PC-3 (cell line): ENCODE measurements at regions of chr3 and their contacts with region 1.

Region 1: DNA sequence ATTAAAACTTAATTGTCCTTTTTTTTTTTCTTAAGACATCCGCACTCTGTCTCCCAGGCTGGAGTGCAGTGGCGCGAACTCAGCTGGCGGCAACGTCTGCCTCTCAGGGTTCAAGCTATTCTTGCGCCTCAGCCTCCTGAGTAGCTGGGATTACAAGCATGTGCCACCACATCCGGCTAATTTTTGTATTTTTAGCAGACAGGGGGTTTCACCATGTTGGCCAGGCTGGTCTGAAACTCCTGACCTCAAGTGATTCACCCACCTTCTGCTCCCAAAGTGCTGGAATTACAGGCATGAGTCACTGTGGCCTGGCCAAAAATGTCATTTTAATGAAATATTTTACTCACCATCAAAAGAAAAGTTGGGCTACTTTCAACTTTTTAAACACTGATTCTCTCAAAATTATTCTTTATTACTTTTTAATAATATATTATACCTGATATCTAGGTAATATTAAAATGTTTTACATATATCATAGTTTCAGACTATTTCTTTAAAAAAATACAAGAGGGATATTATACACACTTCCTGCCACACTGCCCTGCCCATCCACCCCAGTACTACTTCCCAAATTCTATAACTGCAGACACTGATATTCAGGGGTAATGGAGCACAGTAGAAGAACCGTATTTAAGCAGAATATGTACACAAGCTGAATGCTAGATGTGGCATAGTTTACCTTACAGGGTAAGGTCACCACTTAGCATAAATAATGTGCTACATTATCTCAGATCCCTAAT is 723.9 kb upstream of the ZNF385D start:
- DNase-seq: peak; percentile 76
- ATAC-seq: peak; percentile 70
- H3K4me3 ChIP-seq: no peak overlapping the region; the same call in 1 of the 2 replicates
- H3K27ac ChIP-seq: peak overlapping the region; percentile 81
- H3K4me1 ChIP-seq: peaks cover 22% of the 10 kb centered on the region
- H3K27me3 ChIP-seq: no peaks in the 10 kb centered on the region
- CTCF ChIP-seq: no peak

Region 2: DNA sequence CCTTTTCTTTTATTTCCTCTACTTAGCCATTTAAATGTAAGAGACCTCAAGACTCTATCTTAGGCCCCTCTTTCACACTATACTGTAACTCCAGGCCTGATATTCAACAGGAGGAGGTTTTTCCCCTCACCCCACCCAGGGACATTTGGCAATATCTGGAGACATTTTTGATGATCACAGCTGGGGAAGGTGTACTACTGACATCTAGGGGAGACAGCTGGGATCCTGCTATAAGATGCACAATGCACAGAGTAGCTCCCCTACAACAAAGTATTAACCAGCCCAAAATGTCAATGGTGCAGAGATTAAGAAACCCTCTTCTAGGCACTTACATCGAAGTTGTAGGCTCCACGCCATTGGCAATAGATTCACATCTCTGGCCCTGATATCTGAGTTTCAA is 210.7 kb after region 1 on chr3:
- CTCF ChIA-PET with region 1: interaction called, 3 read pairs
- POLR2A ChIA-PET with region 1: no interaction called
- intact Hi-C with region 1: loop called (anchors 10 kb)
- DNase-seq: peak; percentile 60
- ATAC-seq: peak; percentile 94
- H3K4me3 ChIP-seq: no peak overlapping the region
- H3K27ac ChIP-seq: no peak overlapping the region
- H3K4me1 ChIP-seq: no peaks in the 10 kb centered on the region
- H3K27me3 ChIP-seq: no peaks in the 10 kb centered on the region
- CTCF ChIP-seq: peak; percentile 87

Region 3: DNA sequence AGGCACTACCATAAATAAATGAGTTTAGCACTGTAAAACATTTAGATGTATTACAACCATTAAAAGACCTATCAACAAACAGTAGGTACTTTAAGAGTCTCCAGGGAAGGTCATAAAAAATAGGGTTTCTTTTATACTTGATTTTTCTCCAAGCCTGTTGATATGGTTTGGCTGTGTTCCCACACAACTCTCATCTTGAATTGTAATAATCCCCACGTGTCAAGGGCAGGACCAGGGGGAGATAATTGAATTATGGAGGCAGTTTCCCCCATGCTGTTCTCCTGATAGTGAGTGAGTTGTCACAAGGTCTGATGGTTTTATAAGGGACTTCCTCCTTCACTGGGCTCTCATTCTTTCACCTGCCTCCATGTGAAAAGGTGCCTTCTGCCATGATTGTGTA is 259.3 kb after region 1 on chr3:
- CTCF ChIA-PET with region 1: no interaction called
- POLR2A ChIA-PET with region 1: no interaction called
- intact Hi-C with region 1: no loop called
- DNase-seq: no peak
- ATAC-seq: no peak
- H3K4me3 ChIP-seq: no peak overlapping the region
- H3K27ac ChIP-seq: no peak overlapping the region
- H3K4me1 ChIP-seq: peaks cover 7% of the 10 kb centered on the region
- H3K27me3 ChIP-seq: no peaks in the 10 kb centered on the region
- CTCF ChIP-seq: no peak

Region 4: GRCh38 chr3:22779737-22780136 is 304.9 kb after region 1 on chr3:
- CTCF ChIA-PET with region 1: no interaction called
- POLR2A ChIA-PET with region 1: no interaction called
- intact Hi-C with region 1: no loop called
- DNase-seq: no peak
- ATAC-seq: no peak
- H3K4me3 ChIP-seq: no peak overlapping the region
- H3K27ac ChIP-seq: no peak overlapping the region
- H3K4me1 ChIP-seq: no peaks in the 10 kb centered on the region
- H3K27me3 ChIP-seq: no peaks in the 10 kb centered on the region
- CTCF ChIP-seq: no peak